H1 (cell line): ENCODE measurements at regions of chr12 and their contacts with region 1.

Region 1: DNA sequence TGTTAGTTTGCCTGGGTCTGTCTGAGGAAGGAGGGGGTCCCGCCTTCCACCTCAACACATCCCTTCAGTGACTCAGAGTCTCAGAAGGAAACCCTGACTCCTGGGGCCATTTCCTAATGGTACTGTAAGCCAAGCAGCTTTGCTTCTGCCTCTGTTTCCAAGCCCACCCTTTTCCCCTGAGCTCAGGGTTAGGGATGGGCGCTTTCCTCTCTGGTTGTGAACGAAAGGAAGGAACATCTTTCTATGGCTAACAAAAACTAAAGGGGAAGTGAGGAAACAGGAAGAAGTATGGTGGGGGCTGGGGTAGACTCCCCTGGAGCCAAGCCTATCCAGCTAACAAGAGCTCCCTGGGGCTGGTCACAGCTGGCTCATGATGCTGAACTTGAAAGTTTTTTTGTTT is 11.6 kb upstream of the UNC119B start:
- DNase-seq: no peak
- H3K4me3 ChIP-seq: no peak overlapping the region
- H3K27ac ChIP-seq: no peak overlapping the region
- H3K4me1 ChIP-seq: peaks cover 0 to 7% (median 4%) of the 10 kb centered on the region in 4 experiments; a peak in 5 of 7 replicates
- H3K27me3 ChIP-seq: no peaks in the 10 kb centered on the region
- CTCF ChIP-seq: no peak
- EP300 ChIP-seq: no peak
- POLR2A ChIP-seq: no peak
- RAD21 ChIP-seq: no peak

Region 2: GRCh38 chr12:120710031-120710804 is 11.6 kb after region 1 on chr12 and contains the start of gene UNC119B:
- CTCF ChIA-PET with region 1: interaction called, 5 read pairs
- POLR2A ChIA-PET with region 1: interaction called, 42 read pairs
- DNase-seq: peak in 1 of 2 experiments; percentile 82
- H3K4me3 ChIP-seq: peak within 1 kb of the TSS; percentile 72 to 95 (median 87)
- H3K27ac ChIP-seq: peak within 1 kb of the TSS; percentile 82
- H3K4me1 ChIP-seq: peaks cover 5 to 13% (median 9%) of the 10 kb centered on the region in 4 experiments; a peak in 6 of 7 replicates
- H3K27me3 ChIP-seq: no peaks in the 10 kb centered on the region
- CTCF ChIP-seq: no peak
- EP300 ChIP-seq: no peak
- POLR2A ChIP-seq: peak in 1 of 2 experiments; percentile 66; a peak in 1 of 3 replicates
- RAD21 ChIP-seq: no peak
- total RNA-seq, gene UNC119B: 50.1 and 51.9 TPM in 2 replicates